ENCODE measurements at regions of chr4 and their contacts with region 1.

Region 1: GRCh38 chr4:1351854-1352633 is 5.0 kb downstream of the UVSSA start:
- DNase-seq: peak; percentile 93
- ATAC-seq: peak; percentile 45
- H3K4me3 Mint-ChIP-seq: no peak overlapping the region
- H3K27ac Mint-ChIP-seq: peak overlapping the region; percentile 70
- H3K4me1 Mint-ChIP-seq: peaks cover 27% of the 10 kb centered on the region
- H3K27me3 Mint-ChIP-seq: no peaks in the 10 kb centered on the region

Region 2: GRCh38 chr4:1130316-1131186 is 221.5 kb before region 1 on chr4:
- CTCF ChIA-PET with region 1: interaction called, 13 read pairs
- DNase-seq: peak; percentile 84
- ATAC-seq: peak; percentile 98
- H3K4me3 Mint-ChIP-seq: no peak overlapping the region
- H3K27ac Mint-ChIP-seq: no peak overlapping the region
- H3K4me1 Mint-ChIP-seq: peaks cover 4% of the 10 kb centered on the region
- H3K27me3 Mint-ChIP-seq: peaks cover 15% of the 10 kb centered on the region

Region 3: GRCh38 chr4:1604711-1605205 is 252.7 kb after region 1 on chr4:
- CTCF ChIA-PET with region 1: interaction called, 13 read pairs
- DNase-seq: peak; percentile 73
- ATAC-seq: peak; percentile 77
- H3K4me3 Mint-ChIP-seq: peak overlapping the region; percentile 52
- H3K27ac Mint-ChIP-seq: peak overlapping the region; percentile 86
- H3K4me1 Mint-ChIP-seq: peaks cover 21% of the 10 kb centered on the region
- H3K27me3 Mint-ChIP-seq: no peaks in the 10 kb centered on the region

Region 4: DNA sequence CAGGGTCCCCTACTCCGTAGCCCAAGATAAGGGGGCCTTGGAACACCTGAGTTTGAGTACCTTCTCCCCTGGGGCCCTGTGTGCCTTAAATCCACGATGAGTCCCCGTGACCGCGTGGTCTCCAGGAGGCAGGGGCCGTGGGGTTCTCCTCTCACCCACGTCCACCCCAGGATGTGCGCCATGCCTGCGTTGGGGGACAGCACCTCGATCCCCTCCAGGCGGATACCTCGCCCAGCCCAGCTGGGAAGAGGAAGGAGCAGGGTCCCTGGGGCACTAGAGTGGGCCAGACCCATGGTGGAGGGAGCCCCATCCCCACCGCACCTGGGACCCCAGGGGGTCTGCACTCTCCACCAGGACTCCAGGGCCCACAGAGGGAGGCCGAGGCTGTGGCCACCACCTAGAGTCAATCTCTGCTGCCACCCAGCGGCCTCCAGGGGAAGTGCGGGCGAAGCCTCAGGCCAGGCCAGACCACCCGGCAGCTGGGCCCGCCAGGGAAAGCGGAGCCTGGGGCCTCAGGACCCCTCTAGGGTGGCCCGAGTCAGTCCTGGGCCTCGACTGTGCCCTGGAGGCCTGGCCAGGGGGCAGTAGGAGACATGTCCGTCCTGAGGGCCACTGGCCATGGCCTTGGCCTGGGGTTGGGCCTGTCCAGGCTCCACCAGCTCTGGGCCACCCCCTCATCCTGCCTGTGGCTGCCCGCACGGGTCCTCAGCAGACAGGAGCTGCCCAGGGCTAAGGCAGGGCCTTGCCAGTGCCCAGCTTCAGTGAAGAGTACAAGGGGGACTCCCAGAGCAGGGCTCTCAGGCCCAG is 277.1 kb after region 1 on chr4:
- CTCF ChIA-PET with region 1: interaction called, 18 read pairs
- DNase-seq: peak; percentile 78
- ATAC-seq: peak; percentile 85
- H3K4me3 Mint-ChIP-seq: no peak overlapping the region
- H3K27ac Mint-ChIP-seq: no peak overlapping the region
- H3K4me1 Mint-ChIP-seq: no peaks in the 10 kb centered on the region
- H3K27me3 Mint-ChIP-seq: no peaks in the 10 kb centered on the region

Measured in activated CD8-positive, alpha-beta memory T cell treated with anti-CD3 and anti-CD28 coated beads, Interleukin-2, amount 10 ng/mL, durations not matched to agents 7 days and 5 days (primary cell).